OCI-LY7 (cell line): ENCODE measurements at regions of chr3 and their contacts with region 1.

Region 1: DNA sequence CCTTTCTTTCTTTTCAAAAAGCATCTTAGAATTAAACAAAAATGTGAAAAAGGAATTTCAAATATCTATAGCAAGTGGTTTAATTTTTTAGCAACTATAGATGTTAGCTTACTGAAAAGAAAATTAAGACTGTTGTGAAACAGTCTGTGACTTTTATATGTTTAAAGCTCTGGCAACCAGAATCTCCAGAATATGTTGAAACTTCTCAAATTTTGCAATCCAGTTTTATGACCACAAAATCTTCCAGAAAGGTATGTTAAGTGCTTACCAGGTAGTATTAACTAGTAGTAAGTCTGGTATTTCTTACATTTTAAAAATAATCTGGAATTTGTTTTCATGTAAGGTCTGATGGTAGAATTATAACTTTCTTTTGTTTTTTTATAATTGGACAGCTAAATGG is 235.0 kb downstream of the SLC9A9 start:
- DNase-seq: no peak
- H3K4me3 ChIP-seq: no peak overlapping the region
- H3K27ac ChIP-seq: no peak overlapping the region
- H3K4me1 ChIP-seq: no peaks in the 10 kb centered on the region
- CTCF ChIP-seq: no peak

Region 2: GRCh38 chr3:143200001-143200924 is 413.0 kb before region 1 on chr3:
- CTCF ChIA-PET with region 1: no interaction called
- POLR2A ChIA-PET with region 1: no interaction called
- intact Hi-C with region 1: no loop called
- DNase-seq: peak; percentile 24
- H3K4me3 ChIP-seq: peak overlapping the region; percentile 13
- H3K27ac ChIP-seq: peak overlapping the region; percentile 27
- H3K4me1 ChIP-seq: peaks cover 27% of the 10 kb centered on the region
- CTCF ChIP-seq: no peak

Region 3: DNA sequence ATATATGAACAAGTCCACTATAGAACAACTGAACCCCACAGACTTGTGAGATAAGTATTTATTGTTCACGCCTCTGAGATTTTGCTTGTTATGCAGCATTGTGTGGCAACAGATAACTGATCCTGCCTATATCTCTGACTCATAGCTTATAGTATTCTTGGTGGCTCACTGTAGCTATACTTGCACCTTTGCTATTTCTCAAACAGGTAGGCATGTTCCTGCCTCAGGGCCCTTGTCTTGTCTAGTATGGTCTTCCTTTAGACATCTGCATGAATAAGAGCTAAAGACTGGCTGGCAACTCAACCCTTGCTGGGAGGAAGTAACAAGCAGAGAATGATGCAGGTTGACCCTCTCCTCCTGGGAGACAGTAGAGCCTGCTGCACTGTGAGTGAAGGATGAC is 237.5 kb before region 1 on chr3:
- CTCF ChIA-PET with region 1: no interaction called
- POLR2A ChIA-PET with region 1: interaction called, 10 read pairs
- intact Hi-C with region 1: no loop called
- DNase-seq: no peak
- H3K4me3 ChIP-seq: no peak overlapping the region
- H3K27ac ChIP-seq: no peak overlapping the region
- H3K4me1 ChIP-seq: no peaks in the 10 kb centered on the region
- CTCF ChIP-seq: no peak